Cardiac septum (tissue), 1 donor: ENCODE measurements at regions of chr1 and their contacts with region 1.

Region 1: DNA sequence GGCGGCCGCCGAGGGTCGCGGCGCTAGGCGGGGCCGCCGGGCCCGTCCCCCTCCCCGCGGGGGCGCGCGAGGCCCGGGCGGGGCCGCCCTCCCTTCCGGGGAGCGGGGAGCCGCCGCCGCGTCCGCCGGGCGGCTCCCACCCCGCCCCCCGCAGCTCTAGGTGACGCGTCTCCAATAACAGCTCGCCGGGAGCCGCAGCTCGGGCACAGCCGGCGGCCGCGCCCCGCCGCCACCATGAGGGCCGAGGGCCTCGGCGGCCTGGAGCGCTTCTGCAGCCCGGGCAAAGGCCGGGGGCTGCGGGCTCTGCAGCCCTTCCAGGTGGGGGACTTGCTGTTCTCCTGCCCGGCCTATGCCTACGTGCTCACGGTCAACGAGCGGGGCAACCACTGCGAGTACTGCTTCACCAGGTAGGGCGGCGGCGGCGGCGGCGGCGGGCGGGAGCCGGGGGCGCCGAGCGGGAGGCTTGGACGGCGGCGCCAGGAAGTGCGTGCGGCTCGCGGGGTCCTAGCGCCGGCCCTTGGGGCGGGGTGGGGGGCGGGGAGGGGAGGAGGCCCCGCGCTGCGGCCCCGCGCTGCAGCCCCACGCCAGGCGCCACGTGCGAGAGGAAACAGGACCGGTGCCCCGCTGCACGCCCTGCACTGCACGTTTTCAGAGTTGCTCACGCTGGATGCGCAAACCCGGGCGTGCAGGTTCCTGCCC is at the start of gene SMYD2:
- DNase-seq: peak; percentile 90
- total RNA-seq, gene SMYD2: 445 TPM

Region 2: GRCh38 chr1:214228976-214229375 is 52.2 kb before region 1 on chr1:
- intact Hi-C with region 1: loop called (anchors 1 kb)
- DNase-seq: no peak

Region 3: GRCh38 chr1:214316593-214316992 is 35.4 kb after region 1 on chr1:
- intact Hi-C with region 1: loop called (anchors 2 kb)
- DNase-seq: no peak

Region 4: DNA sequence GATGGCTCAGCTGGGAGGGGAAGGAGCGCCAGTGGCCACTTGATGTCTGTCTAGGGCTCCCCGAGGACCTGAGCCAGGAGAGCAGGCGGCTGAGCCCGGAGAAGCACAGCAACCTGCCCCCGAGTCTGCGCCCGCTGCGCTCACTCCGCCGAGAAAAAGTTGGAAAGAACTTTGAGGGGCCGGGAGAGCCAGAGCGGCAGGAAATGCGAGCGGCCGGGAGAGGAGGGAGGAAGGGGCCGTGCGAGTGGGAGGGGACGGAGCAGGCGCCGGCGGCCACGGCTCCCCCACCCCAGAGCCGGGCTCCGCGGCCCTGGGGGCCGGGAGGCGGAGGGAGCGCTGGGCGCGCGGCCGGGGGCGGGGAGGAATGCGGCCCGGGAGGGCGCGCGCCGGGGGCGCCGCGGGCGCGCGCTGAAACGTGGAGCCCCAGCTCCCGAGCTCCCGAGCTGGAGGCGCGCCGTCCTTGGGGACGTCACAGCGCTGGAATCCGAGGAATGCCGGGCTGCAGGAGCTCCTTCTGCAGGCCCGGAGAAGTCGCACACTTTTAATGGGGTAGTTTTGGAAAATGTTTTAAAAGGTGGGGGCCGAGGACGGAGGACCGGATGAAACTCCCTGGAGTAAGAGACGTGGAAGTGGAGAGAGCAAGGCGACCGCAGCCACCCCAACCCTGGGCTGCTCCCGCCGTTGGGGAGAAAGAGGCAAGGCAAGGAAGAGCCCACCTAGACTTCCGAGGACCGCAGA is 270.4 kb after region 1 on chr1 and contains the start of gene PTPN14:
- intact Hi-C with region 1: loop called (anchors 5 kb)
- DNase-seq: peak; percentile 91
- total RNA-seq, gene PTPN14: 67.7 TPM